HepG2 (cell line): ENCODE measurements at regions of chr1 and their contacts with region 1.

Region 1: DNA sequence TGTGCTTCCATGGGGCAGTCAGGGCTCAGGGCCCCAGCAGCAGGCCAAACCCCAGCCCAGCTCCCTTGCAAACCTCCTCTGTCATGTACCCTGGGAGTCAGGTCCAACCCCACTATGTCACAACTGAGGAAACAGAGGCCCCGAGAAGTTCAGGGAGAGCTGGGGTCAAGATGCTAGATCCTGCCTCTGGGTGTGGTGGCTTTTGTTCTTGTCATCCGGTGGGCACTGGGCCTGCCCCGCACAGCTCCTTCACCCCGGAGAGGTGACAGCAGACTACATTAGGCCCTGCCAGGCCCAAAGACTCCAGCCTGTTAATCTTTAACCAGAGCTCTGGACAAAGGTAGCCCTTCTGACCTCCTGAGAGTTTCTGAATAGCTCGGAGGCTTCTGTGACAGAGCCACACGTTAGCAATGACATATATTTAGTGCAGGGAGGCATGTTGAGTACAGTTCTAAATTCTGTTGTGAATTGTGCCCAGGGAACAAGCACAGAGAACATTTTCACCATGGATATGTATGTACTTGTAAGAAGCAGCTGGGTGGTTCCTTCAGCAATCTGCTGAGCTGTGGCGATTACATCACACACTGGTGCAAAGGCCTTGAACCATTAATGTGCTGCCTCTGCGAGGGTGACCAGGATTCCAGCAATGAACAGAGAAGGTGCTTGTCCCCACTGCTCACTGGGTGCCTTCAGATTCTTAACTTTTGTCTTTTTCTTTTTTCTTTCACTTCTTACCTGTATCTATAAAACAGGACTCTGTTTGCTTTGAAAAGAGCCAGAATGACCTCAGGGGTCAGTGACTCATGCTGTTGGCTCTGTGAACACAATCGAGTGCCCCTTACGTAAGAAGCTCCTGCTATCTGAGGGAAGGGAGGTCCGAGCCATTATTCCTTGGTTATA is 102.8 kb downstream of the RHOU start:
- DNase-seq: peak; percentile 98
- ATAC-seq: peak; percentile 89
- H3K4me3 ChIP-seq: peak overlapping the region; percentile 24 to 69 (median 40); a peak in 5 of 6 replicates
- H3K27ac ChIP-seq: peak overlapping the region; percentile 99
- H3K4me1 ChIP-seq: peaks cover 91% of the 10 kb centered on the region
- H3K27me3 ChIP-seq: no peaks in the 10 kb centered on the region; a peak in 1 of 5 replicates
- CTCF ChIP-seq: no peak
- EP300 ChIP-seq: peak in 1 of 2 experiments; percentile 89; a peak in 3 of 4 replicates
- POLR2A ChIP-seq: peak; percentile 86 to 88
- RAD21 ChIP-seq: peak; percentile 7; the same call in 1 of the 2 replicates

Region 2: GRCh38 chr1:228734881-228735801 is 102.9 kb before region 1 on chr1 and contains the start of gene RHOU:
- CTCF ChIA-PET with region 1: no interaction called
- POLR2A ChIA-PET with region 1: interaction called, 46 read pairs
- in situ Hi-C with region 1: no loop called
- intact Hi-C with region 1: loop called (anchors 2 kb)
- DNase-seq: peak; percentile 20
- ATAC-seq: peak; percentile 90
- H3K4me3 ChIP-seq: peak within 1 kb of the TSS; percentile 85 to 94 (median 86)
- H3K27ac ChIP-seq: peak within 1 kb of the TSS; percentile 61
- H3K4me1 ChIP-seq: peaks cover 39% of the 10 kb centered on the region
- H3K27me3 ChIP-seq: peaks cover 2 to 12% of the 10 kb centered on the region in 2 experiments; a peak in 4 of 5 replicates
- CTCF ChIP-seq: peak; percentile 67
- EP300 ChIP-seq: 0 out of 4 replicates have a peak, but pooled peaks of 1 of the 2 experiments have one; percentile 16
- POLR2A ChIP-seq: peak; percentile 59 to 65
- RAD21 ChIP-seq: peak; percentile 95
- total RNA-seq, gene RHOU: 18.5 and 23.6 TPM in 2 replicates

Region 3: GRCh38 chr1:228825840-228826484 is 12.1 kb before region 1 on chr1:
- CTCF ChIA-PET with region 1: no interaction called
- POLR2A ChIA-PET with region 1: interaction called, 17 read pairs
- in situ Hi-C with region 1: no loop called
- intact Hi-C with region 1: no loop called
- DNase-seq: peak; percentile 44
- ATAC-seq: peak; percentile 79
- H3K4me3 ChIP-seq: peak overlapping the region in 1 of 3 experiments; percentile 19; a peak in 1 of 6 replicates
- H3K27ac ChIP-seq: peak overlapping the region; percentile 33
- H3K4me1 ChIP-seq: peaks cover 76% of the 10 kb centered on the region
- H3K27me3 ChIP-seq: no peaks in the 10 kb centered on the region
- CTCF ChIP-seq: 0 out of 2 replicates have a peak, but pooled peaks have one; percentile 5
- EP300 ChIP-seq: peak in 1 of 2 experiments; percentile 48; a peak in 1 of 4 replicates
- POLR2A ChIP-seq: peak in 1 of 2 experiments; percentile 40; a peak in 1 of 4 replicates
- RAD21 ChIP-seq: no peak

Region 4: GRCh38 chr1:228860911-228861831 is 23.1 kb after region 1 on chr1:
- CTCF ChIA-PET with region 1: no interaction called
- POLR2A ChIA-PET with region 1: interaction called, 124 read pairs
- in situ Hi-C with region 1: no loop called
- intact Hi-C with region 1: loop called (anchors 1 kb)
- DNase-seq: peak; percentile 97
- ATAC-seq: peak; percentile 90
- H3K4me3 ChIP-seq: peak overlapping the region in 1 of 3 experiments; percentile 8; a peak in 1 of 6 replicates
- H3K27ac ChIP-seq: peak overlapping the region; percentile 69
- H3K4me1 ChIP-seq: peaks cover 99% of the 10 kb centered on the region
- H3K27me3 ChIP-seq: no peaks in the 10 kb centered on the region
- CTCF ChIP-seq: no peak
- EP300 ChIP-seq: peak; percentile 50 to 89; a peak in 3 of 4 replicates
- POLR2A ChIP-seq: no peak
- RAD21 ChIP-seq: no peak; the same call in 1 of the 2 replicates

Region 5: DNA sequence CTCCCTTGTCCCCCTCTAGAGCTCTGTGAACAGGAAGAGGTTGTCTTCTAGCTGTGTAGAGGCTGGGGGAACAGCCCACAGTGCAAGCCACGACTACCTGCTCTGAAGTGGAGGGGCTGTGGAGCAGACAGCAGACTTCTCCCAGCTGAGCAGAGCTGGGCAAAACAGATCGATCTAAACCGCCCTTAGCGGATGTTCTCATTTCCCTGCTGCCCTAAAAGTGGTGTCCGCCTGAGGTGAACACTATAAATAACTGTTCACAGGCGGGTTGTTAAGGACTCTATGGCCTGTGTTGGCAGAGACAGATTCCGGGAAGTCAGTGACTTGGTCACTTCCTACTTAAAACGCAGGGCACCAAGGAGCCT is 100.5 kb after region 1 on chr1:
- CTCF ChIA-PET with region 1: no interaction called
- POLR2A ChIA-PET with region 1: interaction called, 14 read pairs
- in situ Hi-C with region 1: no loop called
- intact Hi-C with region 1: loop called (anchors 5 kb)
- DNase-seq: peak; percentile 67
- ATAC-seq: peak; percentile 78
- H3K4me3 ChIP-seq: peak overlapping the region; percentile 2 to 31 (median 9); a peak in 3 of 6 replicates
- H3K27ac ChIP-seq: peak overlapping the region; percentile 74
- H3K4me1 ChIP-seq: peaks cover 81% of the 10 kb centered on the region
- H3K27me3 ChIP-seq: no peaks in the 10 kb centered on the region
- CTCF ChIP-seq: 0 out of 2 replicates have a peak, but pooled peaks have one; percentile 4
- EP300 ChIP-seq: peak in 1 of 2 experiments; percentile 17; a peak in 1 of 4 replicates
- POLR2A ChIP-seq: 0 out of 4 replicates have a peak, but pooled peaks of 1 of the 2 experiments have one; percentile 47
- RAD21 ChIP-seq: no peak

Region 6: GRCh38 chr1:229032375-229032774 is 194.3 kb after region 1 on chr1:
- CTCF ChIA-PET with region 1: no interaction called
- POLR2A ChIA-PET with region 1: interaction called, 12 read pairs
- in situ Hi-C with region 1: no loop called
- intact Hi-C with region 1: no loop called
- DNase-seq: peak; percentile 57
- ATAC-seq: peak; percentile 17; the same call in 2 of the 3 replicates
- H3K4me3 ChIP-seq: no peak overlapping the region
- H3K27ac ChIP-seq: peak overlapping the region; percentile 79
- H3K4me1 ChIP-seq: peaks cover 82% of the 10 kb centered on the region
- H3K27me3 ChIP-seq: no peaks in the 10 kb centered on the region
- CTCF ChIP-seq: no peak
- EP300 ChIP-seq: no peak
- POLR2A ChIP-seq: no peak
- RAD21 ChIP-seq: no peak

Region 7: DNA sequence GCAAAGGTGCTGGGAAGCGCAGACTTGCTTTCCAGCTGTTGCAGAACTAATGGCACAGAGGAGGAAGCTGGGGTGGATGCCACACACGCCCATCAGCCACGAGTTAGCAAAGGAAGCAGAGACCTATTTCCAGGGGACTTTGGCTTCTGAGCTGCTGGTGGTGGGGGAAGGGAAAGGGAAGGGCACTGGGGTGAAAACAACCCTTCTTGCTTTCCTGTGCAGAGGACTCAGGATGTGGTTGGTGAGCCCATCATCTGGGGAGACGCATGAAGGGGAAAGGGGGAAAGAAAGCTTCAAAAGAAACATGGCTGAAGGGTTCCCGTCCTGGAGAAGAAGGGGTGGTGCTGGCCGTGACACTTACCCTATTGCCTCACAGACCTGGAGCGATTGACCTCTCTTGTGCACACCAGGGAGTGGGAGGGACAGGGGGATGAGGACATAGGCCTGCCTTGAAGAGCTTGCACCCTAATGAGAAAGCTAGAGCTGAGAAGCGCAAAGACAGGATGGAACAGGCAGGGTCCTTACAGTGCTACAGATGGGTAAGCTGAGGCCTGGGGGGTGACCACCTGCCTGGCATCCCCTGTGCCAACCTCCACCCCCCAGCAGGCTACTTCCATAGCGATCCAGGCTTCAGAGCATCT is 292.1 kb after region 1 on chr1:
- CTCF ChIA-PET with region 1: no interaction called
- POLR2A ChIA-PET with region 1: interaction called, 22 read pairs
- in situ Hi-C with region 1: no loop called
- intact Hi-C with region 1: loop called (anchors 10 kb)
- DNase-seq: peak; percentile 88
- ATAC-seq: peak; percentile 80
- H3K4me3 ChIP-seq: peak overlapping the region in 1 of 3 experiments; percentile 30; a peak in 1 of 6 replicates
- H3K27ac ChIP-seq: peak overlapping the region; percentile 100
- H3K4me1 ChIP-seq: peaks cover 82% of the 10 kb centered on the region
- H3K27me3 ChIP-seq: no peaks in the 10 kb centered on the region
- CTCF ChIP-seq: 0 out of 2 replicates have a peak, but pooled peaks have one; percentile 21
- EP300 ChIP-seq: peak; percentile 59 to 76; a peak in 3 of 4 replicates
- POLR2A ChIP-seq: peak; percentile 54 to 69; a peak in 2 of 4 replicates
- RAD21 ChIP-seq: peak; percentile 47; the same call in 1 of the 2 replicates